Heart left ventricle (tissue), 16 donors: ENCODE measurements at regions of chr2 and their contacts with region 1.

Region 1: GRCh38 chr2:200471324-200471848 is 38.5 kb downstream of the KCTD18 start:
- DNase-seq: no peak
- ATAC-seq: no peak
- H3K4me3 ChIP-seq: no peak overlapping the region
- H3K27ac ChIP-seq: no peak overlapping the region
- H3K4me1 ChIP-seq: peaks cover 0 to 14% (median 1%) of the 10 kb centered on the region in 12 donors
- H3K27me3 ChIP-seq: no peaks in the 10 kb centered on the region
- CTCF ChIP-seq: peak in 11 of 12 donors; percentile 22 to 61 (median 47)
- POLR2A ChIP-seq: no peak

Region 2: GRCh38 chr2:199979832-199980628 is 491.4 kb before region 1 on chr2:
- intact Hi-C with region 1: loop called in 2 of 10 experiments (anchors 5 kb)
- DNase-seq: peak; percentile 76 to 88 (median 79)
- ATAC-seq: peak in 3 of 4 donors; percentile 75 to 82 (median 79)
- H3K4me3 ChIP-seq: peak overlapping the region in 5 of 12 donors; percentile 9 to 36 (median 23)
- H3K27ac ChIP-seq: no peak overlapping the region
- H3K4me1 ChIP-seq: peaks cover 0 to 9% (median 1%) of the 10 kb centered on the region in 12 donors
- H3K27me3 ChIP-seq: no peaks in the 10 kb centered on the region
- CTCF ChIP-seq: peak; percentile 84 to 96 (median 88)
- POLR2A ChIP-seq: no peak

Region 3: DNA sequence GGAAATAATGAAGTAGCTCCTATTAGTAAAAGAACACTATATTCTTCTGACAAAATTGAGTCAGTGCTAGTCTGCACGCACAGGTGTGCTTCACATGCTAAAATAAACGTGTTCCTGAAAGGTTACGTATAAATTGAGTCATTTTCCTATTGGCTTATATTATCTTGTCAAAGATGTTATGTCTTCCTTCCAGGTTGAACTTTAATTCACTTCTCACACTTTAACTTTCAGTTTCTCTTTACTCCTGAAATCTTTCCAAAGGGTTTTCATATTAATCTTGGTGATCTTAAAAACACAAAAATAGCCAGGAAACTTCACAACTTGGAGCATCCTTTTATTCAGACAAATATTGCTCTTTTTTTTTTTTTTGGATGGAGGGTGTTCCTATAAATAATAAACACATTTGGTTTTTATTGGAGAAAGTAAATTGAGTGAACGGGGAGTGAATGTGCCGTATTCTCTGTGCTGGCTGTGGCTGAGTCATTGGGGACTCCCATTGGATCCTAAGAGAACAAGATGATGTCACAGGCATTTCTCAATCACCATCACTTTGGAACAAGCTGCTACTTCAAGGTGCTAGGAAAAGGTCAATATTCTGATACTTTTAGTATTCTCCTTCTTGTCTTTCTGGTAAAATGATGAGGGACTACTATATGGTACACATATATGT is 315.1 kb before region 1 on chr2:
- intact Hi-C with region 1: loop called in 1 of 10 experiments (anchors 10 kb)
- DNase-seq: peak in 2 of 5 donors; percentile 37 to 42
- ATAC-seq: peak; percentile 61 to 86 (median 69)
- H3K4me3 ChIP-seq: peak overlapping the region in 9 of 12 donors; percentile 21 to 55 (median 33)
- H3K27ac ChIP-seq: peak overlapping the region in 2 of 12 donors; percentile 21 to 26
- H3K4me1 ChIP-seq: peaks cover 0 to 8% (median 0%) of the 10 kb centered on the region in 12 donors
- H3K27me3 ChIP-seq: no peaks in the 10 kb centered on the region
- CTCF ChIP-seq: no peak
- POLR2A ChIP-seq: no peak